A549 (cell line): ENCODE measurements at regions of chr4 and their contacts with region 1.

Region 1: DNA sequence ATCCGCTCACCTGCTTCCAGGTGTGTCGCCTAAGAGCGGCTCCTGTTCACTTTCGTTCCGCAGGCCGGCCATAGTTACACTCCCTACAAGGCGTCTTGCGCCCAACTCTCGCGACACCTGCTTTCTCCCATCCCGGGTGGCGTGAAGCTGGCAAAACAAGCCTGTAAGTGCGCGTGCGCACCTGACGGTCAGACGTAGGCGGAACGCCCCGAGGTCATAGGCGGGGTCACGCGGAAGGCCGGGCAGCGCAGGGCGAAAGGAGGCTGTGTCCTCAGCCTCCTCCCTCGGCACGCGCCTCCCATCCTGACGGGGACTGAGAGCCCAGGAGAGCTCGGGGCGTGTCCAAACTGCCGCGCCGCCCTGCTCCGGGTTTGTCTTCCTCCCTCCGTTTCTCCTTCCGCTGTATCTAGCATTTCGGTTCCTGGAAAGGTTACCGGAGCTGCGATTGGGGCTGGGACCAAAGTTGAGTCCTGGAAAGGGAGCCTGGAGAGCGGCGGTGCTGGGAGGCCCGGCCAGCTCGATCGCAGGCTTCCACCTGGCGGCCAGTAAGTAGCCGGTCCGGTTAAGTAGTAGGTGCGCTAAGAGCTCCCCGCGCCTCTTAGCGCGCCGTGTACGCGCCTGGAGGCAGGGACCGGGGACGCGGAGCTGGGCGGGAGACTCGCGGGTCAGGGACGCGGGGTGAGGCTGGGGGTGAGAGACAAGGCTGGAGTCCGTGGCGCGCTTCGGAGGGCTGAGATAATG is at the starts of genes ABHD18 and MFSD8:
- DNase-seq: peak; percentile 76 to 99
- ATAC-seq: peak; percentile 97 to 99
- H3K4me3 ChIP-seq: peak within 1 kb of the TSS; percentile 63
- H3K27ac ChIP-seq: peak within 1 kb of the TSS; percentile 90 to 94
- H3K4me1 ChIP-seq: peaks cover 22% of the 10 kb centered on the region; the same call in 2 of the 3 replicates
- CTCF ChIP-seq: no peak
- EP300 ChIP-seq: no peak
- POLR2A ChIP-seq: peak; percentile 59
- RAD21 ChIP-seq: no peak
- polyA plus RNA-seq, gene ABHD18: 5.1 and 6.1 TPM in 2 replicates
- polyA plus RNA-seq, gene MFSD8: 16.4 and 22.3 TPM in 2 replicates

Region 2: DNA sequence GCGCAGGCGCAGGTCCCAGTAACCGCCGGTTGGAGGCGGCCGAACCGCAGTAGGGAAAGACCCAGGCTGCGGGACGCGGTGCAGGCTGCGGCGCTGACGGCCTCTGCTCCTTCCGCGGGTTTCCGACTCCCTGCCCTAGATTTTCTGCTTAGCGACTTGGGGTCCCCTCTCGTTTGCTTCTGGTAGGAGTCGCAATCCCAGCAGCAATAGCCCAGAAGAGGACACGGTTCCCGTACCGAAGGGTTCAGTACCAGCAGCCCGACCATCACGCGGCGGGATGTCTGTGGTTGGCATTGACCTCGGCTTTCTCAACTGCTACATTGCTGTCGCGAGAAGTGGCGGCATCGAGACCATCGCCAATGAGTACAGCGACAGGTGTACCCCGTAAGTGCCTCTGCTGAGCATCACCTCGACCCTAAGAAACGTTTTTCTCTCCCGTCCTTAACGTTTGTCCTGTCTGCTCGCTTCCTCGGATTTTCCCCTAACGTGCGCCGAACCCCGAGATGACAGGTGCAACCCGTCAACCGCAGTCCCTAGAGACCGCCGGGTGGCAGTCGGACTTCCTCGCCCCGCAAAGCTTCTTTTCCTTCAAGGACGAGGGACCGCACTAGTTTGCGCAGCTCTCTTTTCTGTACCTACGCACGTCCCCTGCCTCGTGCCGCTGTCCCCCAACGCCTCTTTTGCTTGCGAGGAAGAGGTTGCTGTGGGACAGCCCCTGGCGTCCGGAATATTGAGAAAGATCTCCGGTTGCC is 182.8 kb before region 1 on chr4 and contains the start of gene HSPA4L:
- CTCF ChIA-PET with region 1: no interaction called
- POLR2A ChIA-PET with region 1: interaction called, 18 read pairs
- DNase-seq: peak; percentile 65 to 72
- ATAC-seq: peak; percentile 80 to 91
- H3K4me3 ChIP-seq: peak within 1 kb of the TSS; percentile 83
- H3K27ac ChIP-seq: peak within 1 kb of the TSS; percentile 84 to 96
- H3K4me1 ChIP-seq: no peaks in the 10 kb centered on the region
- CTCF ChIP-seq: no peak; the same call in 2 of the 3 replicates
- EP300 ChIP-seq: no peak
- POLR2A ChIP-seq: peak; percentile 78
- RAD21 ChIP-seq: peak in 1 of 2 experiments; percentile 35; a peak in 2 of 5 replicates
- polyA plus RNA-seq, gene HSPA4L: 9.2 and 12.1 TPM in 2 replicates

Region 3: GRCh38 chr4:127880764-127881562 is 84.3 kb before region 1 on chr4 and contains the start of gene PLK4:
- CTCF ChIA-PET with region 1: interaction called, 4 read pairs
- POLR2A ChIA-PET with region 1: interaction called, 21 read pairs
- DNase-seq: peak; percentile 81 to 95
- ATAC-seq: peak; percentile 91 to 93
- H3K4me3 ChIP-seq: peak within 1 kb of the TSS; percentile 80
- H3K27ac ChIP-seq: peak within 1 kb of the TSS; percentile 91 to 95
- H3K4me1 ChIP-seq: peaks cover 10% of the 10 kb centered on the region
- CTCF ChIP-seq: no peak
- EP300 ChIP-seq: no peak
- POLR2A ChIP-seq: no peak; the same call in 1 of the 2 replicates
- RAD21 ChIP-seq: peak in 1 of 2 experiments; percentile 17; a peak in 1 of 5 replicates
- polyA plus RNA-seq, gene PLK4: 28.5 and 34.2 TPM in 2 replicates

Region 4: DNA sequence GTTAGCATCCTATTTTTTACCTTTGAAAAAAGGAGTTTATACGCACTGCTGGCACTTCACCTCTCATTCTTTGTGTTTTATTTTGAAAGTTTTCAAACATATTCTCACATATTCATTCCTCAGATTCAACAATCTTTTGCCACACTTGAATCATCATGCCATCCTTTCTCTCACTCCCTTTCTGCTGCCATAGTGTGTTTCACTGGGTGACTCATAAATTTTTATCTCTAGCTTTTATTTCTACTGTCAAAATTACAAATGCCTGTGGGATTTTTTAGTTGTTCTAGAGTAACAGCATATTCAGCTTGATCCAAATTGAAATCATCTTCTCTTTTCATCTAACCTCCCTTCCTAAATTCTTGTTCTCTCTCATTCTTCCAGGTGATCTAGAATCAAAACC is 28.3 kb before region 1 on chr4:
- CTCF ChIA-PET with region 1: no interaction called
- POLR2A ChIA-PET with region 1: no interaction called
- DNase-seq: no peak
- ATAC-seq: no peak
- H3K4me3 ChIP-seq: no peak overlapping the region
- H3K27ac ChIP-seq: no peak overlapping the region
- H3K4me1 ChIP-seq: no peaks in the 10 kb centered on the region
- CTCF ChIP-seq: no peak
- EP300 ChIP-seq: no peak
- POLR2A ChIP-seq: no peak
- RAD21 ChIP-seq: no peak

Region 5: DNA sequence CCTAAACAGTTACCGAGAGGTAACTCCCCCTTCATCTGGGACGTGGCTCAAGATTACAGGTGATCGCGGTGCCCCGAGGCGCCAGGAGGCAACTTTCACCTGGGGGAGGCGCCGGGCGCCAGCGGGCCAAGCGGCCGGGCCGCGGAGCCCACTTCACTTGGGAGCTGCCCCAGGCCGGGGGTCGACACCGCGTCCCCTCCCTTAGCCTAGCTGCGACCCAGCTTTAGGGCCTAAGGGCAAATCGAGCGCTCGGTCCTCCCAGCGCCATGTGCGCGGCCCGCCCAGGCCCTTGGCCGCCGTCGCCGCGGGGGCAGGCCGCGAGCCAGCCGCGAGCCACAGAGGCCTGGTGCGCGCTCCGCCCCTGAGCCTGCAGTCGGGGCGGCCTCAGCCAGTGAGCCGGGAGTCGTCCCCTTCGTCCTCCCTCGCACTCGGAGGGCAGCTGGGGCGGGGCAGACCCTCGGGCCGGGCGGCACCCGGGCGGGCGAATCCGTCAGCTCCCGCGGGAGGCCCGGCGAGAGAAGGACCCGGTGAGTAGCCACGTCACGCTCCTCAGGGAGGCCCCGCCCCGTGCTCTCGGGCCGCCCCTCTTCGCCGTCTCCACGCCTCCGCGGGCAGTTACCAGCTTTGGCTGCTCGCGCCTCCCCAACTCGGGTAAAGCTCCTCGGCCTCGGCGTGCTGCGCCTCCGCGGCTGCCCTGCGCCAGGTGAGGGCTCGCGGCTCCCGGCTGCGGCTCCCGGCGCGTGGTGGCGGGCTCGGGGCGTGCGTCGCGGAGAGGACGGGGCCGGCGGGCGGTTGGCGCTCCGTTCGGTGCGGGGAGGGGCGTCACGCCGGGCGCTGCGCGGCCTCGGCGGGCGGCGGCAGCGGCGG is 95.7 kb after region 1 on chr4 and contains the start of gene LARP1B:
- CTCF ChIA-PET with region 1: interaction called, 3 read pairs
- POLR2A ChIA-PET with region 1: interaction called, 24 read pairs
- DNase-seq: peak; percentile 83 to 94
- ATAC-seq: peak; percentile 91 to 94
- H3K4me3 ChIP-seq: peak within 1 kb of the TSS; percentile 75
- H3K27ac ChIP-seq: peak within 1 kb of the TSS; percentile 99
- H3K4me1 ChIP-seq: 0 out of 3 replicates have a peak, but pooled peaks cover 8% of the 10 kb centered on the region
- CTCF ChIP-seq: no peak
- EP300 ChIP-seq: no peak
- POLR2A ChIP-seq: peak; percentile 78
- RAD21 ChIP-seq: no peak
- polyA plus RNA-seq, gene LARP1B: 14.1 and 25.6 TPM in 2 replicates